Activated naive CD4-positive, alpha-beta T cell treated with anti-CD3 and anti-CD28 coated beads for 36 hours (primary cell): ENCODE measurements at regions of chrX and their contacts with region 1.

Region 1: DNA sequence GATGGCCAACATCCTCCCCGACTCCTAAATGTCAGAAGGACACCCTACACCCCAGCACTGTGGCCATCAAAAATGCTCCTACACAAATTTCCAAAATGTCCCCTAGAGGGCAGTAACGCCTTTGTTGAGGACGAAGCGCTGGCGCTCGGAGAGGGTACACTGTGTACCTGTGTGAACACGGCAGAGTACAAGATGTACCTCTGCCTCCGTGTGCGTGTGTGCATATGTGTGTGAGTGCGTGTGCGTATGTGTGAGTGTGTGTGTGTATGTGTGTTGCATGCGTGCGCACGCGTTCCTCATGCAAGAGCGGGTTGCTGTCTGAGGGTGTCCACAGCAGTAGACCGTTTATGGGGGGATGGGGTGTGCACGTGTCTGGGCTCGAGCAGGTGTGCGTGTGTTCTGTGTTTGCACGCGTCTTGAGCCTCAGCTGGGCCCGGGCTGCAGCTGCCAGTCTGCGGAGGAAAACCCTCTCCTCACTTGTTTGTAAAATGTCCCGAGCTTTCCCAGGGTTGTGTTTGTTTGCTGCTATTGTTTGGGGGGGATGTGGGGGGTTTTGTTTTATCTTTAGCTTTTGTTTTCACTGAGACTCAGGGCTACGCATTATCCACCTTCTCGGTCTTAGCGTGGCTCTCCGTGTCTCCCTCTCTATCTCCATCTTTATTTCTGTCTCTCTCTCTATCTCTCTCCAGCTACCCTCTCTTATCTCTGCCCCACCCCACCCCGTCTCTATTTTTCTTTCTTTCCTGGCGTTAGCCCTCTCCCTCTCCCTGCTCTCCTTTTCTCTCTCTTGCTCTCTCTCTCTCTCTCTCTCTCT is 10.4 kb upstream of the TSPYL2 start:
- DNase-seq: peak; percentile 72
- H3K4me3 Mint-ChIP-seq: peak overlapping the region; percentile 85
- H3K27ac Mint-ChIP-seq: peak overlapping the region; percentile 90
- H3K4me1 Mint-ChIP-seq: peaks cover 12% of the 10 kb centered on the region
- H3K27me3 Mint-ChIP-seq: no peaks in the 10 kb centered on the region

Region 2: DNA sequence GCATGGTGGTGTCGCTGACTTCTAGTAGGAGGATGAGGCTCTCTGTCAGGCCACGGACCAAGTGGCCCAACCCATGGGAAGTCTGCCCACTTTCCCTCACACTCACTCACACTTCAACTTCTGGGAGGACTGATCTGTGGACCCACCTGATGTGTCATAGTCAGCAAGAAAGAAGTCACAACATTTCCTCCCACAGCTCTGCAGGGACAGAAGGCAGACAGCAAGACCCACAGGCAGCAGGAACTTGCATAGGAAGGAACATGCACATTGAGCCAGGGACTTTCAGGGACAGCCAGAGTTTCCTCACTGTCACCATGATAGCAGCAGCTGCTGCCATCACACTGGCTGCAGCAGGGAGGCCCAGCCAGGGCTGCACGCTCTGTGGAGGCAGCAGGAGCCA is 241.3 kb before region 1 on chrX:
- CTCF ChIA-PET with region 1: no interaction called
- intact Hi-C with region 1: no loop called
- DNase-seq: no peak
- H3K4me3 Mint-ChIP-seq: no peak overlapping the region
- H3K27ac Mint-ChIP-seq: no peak overlapping the region
- H3K4me1 Mint-ChIP-seq: no peaks in the 10 kb centered on the region
- H3K27me3 Mint-ChIP-seq: no peaks in the 10 kb centered on the region

Region 3: DNA sequence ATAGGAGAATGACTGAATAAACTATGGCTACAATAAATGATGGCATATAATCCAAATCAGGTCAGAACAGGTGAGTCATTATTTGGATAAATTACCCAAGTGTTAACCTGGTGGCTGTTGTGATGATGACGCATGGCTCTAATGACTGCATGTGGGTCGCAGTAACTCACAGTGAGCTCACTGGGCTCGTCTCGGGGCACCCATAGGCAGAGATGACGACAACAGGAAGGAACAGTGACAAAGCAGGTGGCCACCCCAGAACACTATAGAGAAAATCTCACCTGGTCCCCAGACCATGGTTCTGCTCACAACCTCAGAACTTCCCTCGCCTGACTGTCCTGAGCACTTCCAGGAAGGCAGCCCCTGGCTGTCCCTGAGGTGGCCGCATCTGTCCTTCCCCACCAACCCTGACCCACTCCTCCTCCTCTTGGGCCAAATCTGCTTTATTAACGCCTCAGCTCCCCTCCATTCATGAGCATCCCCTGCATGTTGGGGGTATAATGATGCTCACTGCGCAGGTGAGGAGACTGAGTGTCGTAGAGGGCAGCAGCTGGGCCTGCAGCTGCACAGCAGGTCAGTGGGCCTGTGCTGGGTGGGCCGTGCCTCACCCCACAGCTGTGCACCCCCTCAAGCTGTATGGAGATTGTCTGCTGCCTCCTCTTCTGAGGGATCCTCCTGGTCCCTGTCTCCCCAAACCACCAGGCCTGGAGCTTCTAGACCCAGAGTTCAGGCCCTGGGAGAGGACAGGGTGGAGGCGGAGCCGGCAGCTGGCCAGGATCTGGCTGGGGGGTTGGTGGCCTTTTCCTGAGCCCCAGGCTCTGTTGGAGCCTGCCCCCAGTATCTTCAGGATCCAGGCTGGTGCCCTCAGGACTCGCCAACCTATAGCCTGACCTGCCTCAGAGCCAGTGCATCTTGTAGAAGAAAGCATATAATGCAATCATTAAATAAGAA is 82.6 kb before region 1 on chrX:
- CTCF ChIA-PET with region 1: no interaction called
- intact Hi-C with region 1: no loop called
- DNase-seq: peak; percentile 11
- H3K4me3 Mint-ChIP-seq: no peak overlapping the region
- H3K27ac Mint-ChIP-seq: no peak overlapping the region
- H3K4me1 Mint-ChIP-seq: peaks cover 23% of the 10 kb centered on the region
- H3K27me3 Mint-ChIP-seq: no peaks in the 10 kb centered on the region

Region 4: GRCh38 chrX:53081925-53082772 is 10.3 kb after region 1 on chrX and contains the start of gene TSPYL2:
- CTCF ChIA-PET with region 1: interaction called, 10 read pairs
- intact Hi-C with region 1: no loop called
- DNase-seq: peak; percentile 93
- H3K4me3 Mint-ChIP-seq: peak within 1 kb of the TSS; percentile 90
- H3K27ac Mint-ChIP-seq: peak within 1 kb of the TSS; percentile 94
- H3K4me1 Mint-ChIP-seq: peaks cover 48% of the 10 kb centered on the region
- H3K27me3 Mint-ChIP-seq: no peaks in the 10 kb centered on the region
- total RNA-seq, gene TSPYL2: 72.2 to 74.4 TPM

Region 5: GRCh38 chrX:53088136-53088974 is 16.5 kb after region 1 on chrX:
- CTCF ChIA-PET with region 1: interaction called, 30 read pairs
- intact Hi-C with region 1: loop called (anchors 1 kb)
- DNase-seq: peak; percentile 85
- H3K4me3 Mint-ChIP-seq: peak overlapping the region; percentile 79
- H3K27ac Mint-ChIP-seq: peak overlapping the region; percentile 93
- H3K4me1 Mint-ChIP-seq: peaks cover 58% of the 10 kb centered on the region
- H3K27me3 Mint-ChIP-seq: no peaks in the 10 kb centered on the region

Region 6: GRCh38 chrX:53153581-53153980 is 81.8 kb after region 1 on chrX:
- CTCF ChIA-PET with region 1: no interaction called
- intact Hi-C with region 1: no loop called
- DNase-seq: no peak
- H3K4me3 Mint-ChIP-seq: no peak overlapping the region
- H3K27ac Mint-ChIP-seq: no peak overlapping the region
- H3K4me1 Mint-ChIP-seq: no peaks in the 10 kb centered on the region
- H3K27me3 Mint-ChIP-seq: no peaks in the 10 kb centered on the region